CD4-positive, alpha-beta T cell (primary cell): ENCODE measurements at regions of chr4 and their contacts with region 1.

Region 1: GRCh38 chr4:40550948-40551462 is 78.7 kb downstream of the RBM47 start:
- DNase-seq: peak in 10 of 14 experiments; percentile 1 to 65 (median 8)
- ATAC-seq: peak; percentile 88
- H3K4me3 ChIP-seq: peak overlapping the region; percentile 30
- H3K4me3 Mint-ChIP-seq: peak overlapping the region; percentile 87
- H3K27ac ChIP-seq: peak overlapping the region; percentile 16 to 40
- H3K27ac Mint-ChIP-seq: peak overlapping the region; percentile 87
- H3K4me1 ChIP-seq: peaks cover 11% of the 10 kb centered on the region
- H3K4me1 Mint-ChIP-seq: peaks cover 12% of the 10 kb centered on the region
- H3K27me3 ChIP-seq: no peaks in the 10 kb centered on the region
- H3K27me3 Mint-ChIP-seq: no peaks in the 10 kb centered on the region
- CTCF ChIP-seq: peak; percentile 33

Region 2: DNA sequence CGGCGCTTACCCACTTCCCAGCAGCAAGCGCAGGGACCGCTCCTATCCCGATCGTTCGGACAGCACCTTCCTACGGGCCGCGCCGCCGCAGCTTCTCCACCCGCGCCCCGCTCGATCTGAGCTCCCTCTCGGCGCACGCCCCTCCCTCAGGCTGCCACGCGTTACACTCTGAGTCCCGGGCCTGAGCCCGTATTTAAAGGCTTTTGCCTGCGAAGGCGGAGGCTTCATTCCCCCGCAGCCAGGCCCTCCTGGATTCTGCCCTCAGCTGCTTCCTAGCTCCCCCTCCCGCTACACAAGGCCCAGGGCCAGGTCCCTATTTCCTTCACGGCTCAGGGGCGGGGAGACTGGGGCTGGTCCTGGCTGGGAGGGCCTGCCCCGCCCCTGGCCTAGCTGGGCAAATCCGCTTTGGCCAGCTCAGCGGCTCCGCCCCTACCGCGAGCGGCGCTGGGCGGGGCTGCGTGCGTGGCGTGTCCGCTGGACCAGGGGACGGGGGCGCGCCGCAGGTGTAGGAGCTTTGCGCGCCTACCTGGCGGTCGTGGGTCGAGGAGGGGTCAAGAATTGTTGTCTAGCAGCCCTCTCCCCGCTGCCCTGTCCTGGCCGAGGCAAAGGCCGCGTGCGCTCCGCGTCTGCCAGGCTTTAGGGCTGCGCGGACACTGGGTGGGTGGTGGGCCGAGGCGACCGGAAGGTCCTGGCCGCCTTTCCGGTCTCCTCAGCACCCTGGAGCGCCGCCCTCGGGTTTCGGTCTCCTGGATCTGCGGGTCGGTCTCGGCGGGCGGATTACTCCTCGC is 1023.5 kb before region 1 on chr4 and contains the start of gene UGDH:
- CTCF ChIA-PET with region 1: no interaction called
- POLR2A ChIA-PET with region 1: no interaction called
- intact Hi-C with region 1: no loop called
- DNase-seq: peak; percentile 73 to 96 (median 89)
- ATAC-seq: peak; percentile 98
- H3K4me3 ChIP-seq: peak within 1 kb of the TSS; percentile 98
- H3K4me3 Mint-ChIP-seq: peak within 1 kb of the TSS; percentile 98
- H3K27ac ChIP-seq: peak within 1 kb of the TSS; percentile 52 to 65
- H3K27ac Mint-ChIP-seq: peak within 1 kb of the TSS; percentile 88
- H3K4me1 ChIP-seq: peaks cover 22% of the 10 kb centered on the region
- H3K4me1 Mint-ChIP-seq: peaks cover 22% of the 10 kb centered on the region
- H3K27me3 ChIP-seq: no peaks in the 10 kb centered on the region
- H3K27me3 Mint-ChIP-seq: no peaks in the 10 kb centered on the region
- CTCF ChIP-seq: no peak
- total RNA-seq, gene UGDH: 3.5 to 3.7 TPM

Region 3: DNA sequence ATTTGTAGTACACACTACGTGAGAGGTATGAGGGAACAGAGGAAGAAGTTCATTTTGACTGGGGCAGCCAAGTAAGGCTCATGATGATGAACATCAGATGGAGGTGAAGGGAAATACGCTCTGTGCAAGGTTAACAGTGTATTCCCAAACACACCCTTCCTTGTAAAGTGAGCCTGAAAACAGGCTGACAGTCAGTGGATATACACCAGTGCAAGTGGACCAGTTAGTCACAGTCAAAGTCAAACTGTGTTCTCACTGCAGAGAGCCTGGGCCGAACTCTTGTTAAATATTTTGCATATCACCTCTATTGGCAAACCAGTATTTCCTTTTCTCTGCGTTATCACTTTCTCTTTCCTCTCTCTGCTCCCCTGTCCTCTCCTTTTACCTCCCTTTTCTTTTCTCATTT is 377.5 kb before region 1 on chr4:
- CTCF ChIA-PET with region 1: no interaction called
- POLR2A ChIA-PET with region 1: no interaction called
- intact Hi-C with region 1: loop called in 1 of 2 experiments (anchors 10 kb)
- DNase-seq: peak in 2 of 14 experiments; percentile 26 to 35
- ATAC-seq: no peak
- H3K4me3 ChIP-seq: no peak overlapping the region
- H3K4me3 Mint-ChIP-seq: peak overlapping the region; percentile 43
- H3K27ac ChIP-seq: no peak overlapping the region
- H3K27ac Mint-ChIP-seq: peak overlapping the region; percentile 43
- H3K4me1 ChIP-seq: peaks cover 10% of the 10 kb centered on the region
- H3K4me1 Mint-ChIP-seq: peaks cover 19% of the 10 kb centered on the region
- H3K27me3 ChIP-seq: no peaks in the 10 kb centered on the region
- H3K27me3 Mint-ChIP-seq: no peaks in the 10 kb centered on the region
- CTCF ChIP-seq: no peak